Transverse colon (tissue), 4 donors: ENCODE measurements at regions of chr13 and their contacts with region 1.

Region 1: GRCh38 chr13:42039946-42040729 is 8.3 kb upstream of the DGKH start:
- DNase-seq: peak; percentile 95
- H3K4me3 ChIP-seq: peak overlapping the region; percentile 80 to 92 (median 86)
- H3K27ac ChIP-seq: peak overlapping the region; percentile 96 to 100 (median 98)
- H3K4me1 ChIP-seq: peaks cover 2 to 19% (median 17%) of the 10 kb centered on the region in 4 donors
- H3K27me3 ChIP-seq: no peaks in the 10 kb centered on the region
- CTCF ChIP-seq: peak in 2 of 5 experiments; percentile 20 to 34
- EP300 ChIP-seq: no peak
- POLR2A ChIP-seq: peak; percentile 88

Region 2: DNA sequence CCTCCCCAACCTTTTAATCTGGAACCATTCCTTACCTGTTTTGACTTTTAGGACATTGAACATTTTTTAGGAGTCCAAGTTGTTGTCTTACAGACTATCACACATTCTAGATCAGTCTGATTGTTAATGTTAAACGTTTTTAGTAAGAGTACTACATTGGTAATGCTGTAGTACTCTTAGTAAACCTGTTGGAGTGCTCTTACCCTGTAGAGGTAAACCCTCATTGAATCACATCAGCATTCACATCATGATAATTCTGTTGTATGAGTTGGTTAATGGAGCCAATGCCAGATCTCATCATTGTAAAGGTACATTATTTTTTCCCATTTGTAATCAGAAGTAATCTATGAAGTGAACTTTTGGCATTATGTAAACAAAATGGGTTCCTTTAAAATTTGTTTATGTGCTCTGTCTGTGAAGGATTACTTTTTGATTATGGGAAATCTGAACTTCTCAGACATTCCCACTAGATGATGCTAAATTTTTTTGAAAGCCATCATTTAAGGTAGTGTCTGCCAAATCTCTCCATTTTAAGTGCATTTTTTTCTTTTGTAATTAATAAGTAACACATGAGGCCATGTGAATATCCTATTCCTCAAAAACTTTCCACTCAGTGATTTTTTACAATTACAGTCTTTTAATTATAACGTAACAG is 134.4 kb before region 1 on chr13:
- in situ Hi-C with region 1: loop called in 1 of 4 experiments (anchors 25 kb)
- intact Hi-C with region 1: no loop called
- DNase-seq: no peak
- H3K4me3 ChIP-seq: no peak overlapping the region
- H3K27ac ChIP-seq: no peak overlapping the region
- H3K4me1 ChIP-seq: no peaks in the 10 kb centered on the region
- H3K27me3 ChIP-seq: no peaks in the 10 kb centered on the region
- CTCF ChIP-seq: peak; percentile 44 to 64 (median 53)
- EP300 ChIP-seq: no peak
- POLR2A ChIP-seq: no peak

Region 3: DNA sequence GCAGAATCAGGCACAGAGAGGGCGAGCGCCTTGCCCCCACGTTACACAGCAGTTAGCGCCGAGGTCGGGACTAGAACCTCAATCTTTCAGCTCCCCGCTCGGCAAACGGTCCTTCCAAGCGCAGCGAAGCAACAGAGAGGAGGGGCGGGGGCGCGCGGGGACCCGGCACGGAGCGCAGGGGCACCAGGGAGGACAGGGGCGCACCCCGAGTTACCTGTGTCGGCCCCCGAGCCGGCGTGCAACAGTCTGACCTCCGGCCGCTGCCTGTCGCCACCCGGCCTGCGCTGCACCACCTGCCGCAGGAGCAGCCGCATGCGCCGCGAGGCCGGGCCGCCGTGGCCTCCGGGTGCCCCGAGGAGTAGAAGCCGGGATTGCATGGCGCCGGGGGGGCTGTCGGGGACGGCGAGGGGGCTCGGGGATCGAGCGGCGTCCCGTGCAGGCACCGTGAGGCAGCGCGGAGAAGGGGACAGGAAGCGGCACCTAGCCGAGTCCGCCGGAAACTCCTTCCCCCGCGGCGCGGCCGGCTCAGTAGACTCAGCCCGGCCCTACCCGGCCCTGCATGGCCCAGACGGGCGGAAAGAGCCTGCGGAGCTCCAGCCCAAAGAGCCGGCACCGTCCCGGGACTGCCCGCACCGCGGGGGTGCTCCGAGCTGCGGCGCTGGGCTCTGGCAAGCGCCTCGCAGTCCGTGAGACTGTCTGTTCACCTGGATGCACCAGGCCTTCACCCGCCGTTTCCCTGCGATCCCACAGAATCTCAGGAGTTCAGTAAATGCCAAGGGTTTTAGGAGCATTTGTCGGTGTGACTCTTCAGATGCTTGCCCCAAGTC is 79.3 kb before region 1 on chr13 and contains the start of gene VWA8:
- in situ Hi-C with region 1: no loop called
- intact Hi-C with region 1: loop called (anchors 5 kb)
- DNase-seq: peak; percentile 87
- H3K4me3 ChIP-seq: peak within 1 kb of the TSS; percentile 55 to 93 (median 73)
- H3K27ac ChIP-seq: peak within 1 kb of the TSS; percentile 85 to 95 (median 88)
- H3K4me1 ChIP-seq: peaks cover 0 to 27% (median 12%) of the 10 kb centered on the region in 4 donors
- H3K27me3 ChIP-seq: no peaks in the 10 kb centered on the region
- CTCF ChIP-seq: no peak
- EP300 ChIP-seq: no peak
- POLR2A ChIP-seq: peak; percentile 37
- total RNA-seq, gene VWA8: 12.7 to 65.1 (median 35.0) TPM